Dorsolateral prefrontal cortex (tissue), 120 donors: ENCODE measurements at regions of chr5 and their contacts with region 1.

Region 1: DNA sequence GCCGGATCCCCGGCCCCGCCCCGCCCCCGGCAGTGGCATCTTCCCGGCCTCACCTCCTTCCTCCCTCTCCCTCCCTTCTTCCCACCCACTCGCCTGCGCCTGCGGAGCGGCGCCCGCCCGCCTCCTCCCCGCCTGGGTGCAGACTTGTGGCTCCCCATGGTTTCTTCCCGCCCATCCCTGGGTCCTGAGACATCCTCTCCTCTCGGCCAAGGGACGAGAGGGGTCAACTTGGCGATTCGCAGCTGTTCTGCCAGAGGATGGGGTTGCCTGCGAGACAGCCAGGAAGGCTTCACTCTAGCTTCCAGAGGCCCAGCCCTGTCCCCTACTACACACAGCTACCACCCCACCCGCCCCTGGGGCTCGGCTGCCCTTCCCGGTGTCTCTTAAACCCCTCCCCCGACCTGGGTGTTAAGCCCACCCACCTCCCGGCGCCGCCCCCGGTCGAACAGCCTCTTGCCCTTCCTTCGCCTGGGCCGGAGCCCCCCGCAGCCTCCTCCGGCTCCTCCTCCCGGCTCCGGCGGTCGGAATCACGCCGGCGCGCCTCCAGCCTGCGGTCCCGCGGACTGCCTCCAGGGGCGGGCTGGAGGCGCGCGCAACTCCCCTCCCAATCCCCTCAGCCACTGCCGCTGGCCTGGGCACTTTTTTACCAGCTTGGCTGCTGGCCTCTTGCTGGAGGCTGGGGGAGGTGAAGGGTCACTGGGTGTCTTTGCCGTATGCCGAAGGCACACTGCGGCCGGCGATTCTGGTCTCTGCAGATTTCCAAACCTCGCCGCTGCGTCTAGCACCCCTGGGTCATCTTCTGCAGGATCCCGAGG is 1.9 kb downstream of the JADE2 start:
- DNase-seq: peak; percentile 47 to 89 (median 74)
- H3K4me3 ChIP-seq: peak overlapping the region; percentile 67 to 98 (median 92)
- H3K27ac ChIP-seq: peak overlapping the region; percentile 94 to 100 (median 100)
- H3K27me3 ChIP-seq: no peaks in the 10 kb centered on the region
- CTCF ChIP-seq: peak in 55 of 56 donors; percentile 40 to 82 (median 66)

Region 2: DNA sequence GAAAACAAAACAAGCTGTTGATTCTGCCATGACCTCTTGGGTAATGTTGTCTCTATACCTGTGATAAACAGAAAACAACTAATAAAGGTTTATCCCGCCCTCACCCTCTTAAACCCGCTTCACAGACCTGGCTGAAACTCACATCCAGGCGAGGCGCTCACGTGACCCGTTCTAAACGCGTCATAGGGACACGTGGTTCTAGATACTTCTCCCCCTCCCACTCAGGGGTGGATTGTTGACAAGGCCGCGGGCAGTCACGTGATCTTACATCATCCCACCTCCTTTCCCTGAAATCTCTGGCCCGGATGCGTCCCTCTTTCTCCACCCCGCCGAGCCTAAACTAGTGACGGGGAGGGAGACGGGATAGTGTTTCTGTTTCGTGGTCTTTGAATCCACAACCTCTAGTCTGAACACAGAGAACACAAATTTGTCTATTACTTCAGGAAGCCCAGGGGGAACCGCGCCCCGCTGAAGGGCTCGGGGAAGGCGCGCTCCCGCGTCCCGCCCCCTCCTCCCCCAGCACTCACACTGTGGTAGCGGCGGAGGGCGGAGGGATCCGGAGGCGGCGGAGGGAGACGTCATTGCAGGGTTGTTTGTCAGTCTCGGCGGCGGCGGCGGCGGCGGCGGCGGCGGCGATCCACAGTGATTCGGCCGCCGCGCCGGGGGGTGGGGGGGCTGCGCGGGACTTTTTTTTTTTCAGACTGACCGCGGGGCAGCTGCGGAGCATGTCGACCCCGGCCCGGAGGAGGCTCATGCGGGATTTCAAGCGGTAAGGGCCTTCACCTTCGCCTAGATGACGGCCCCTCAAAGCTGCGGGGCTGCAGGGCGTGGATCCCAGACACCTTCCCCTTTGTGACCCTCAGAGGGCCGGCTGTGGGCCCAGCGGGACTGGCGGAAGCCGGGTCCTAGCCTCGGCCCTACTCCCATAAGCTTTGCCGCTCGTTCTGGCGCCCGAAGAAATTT is 156.2 kb before region 1 on chr5 and contains the start of gene UBE2B:
- intact Hi-C with region 1: loop called (anchors 1 kb)
- DNase-seq: peak; percentile 96 to 100 (median 99)
- H3K4me3 ChIP-seq: peak within 1 kb of the TSS; percentile 60 to 100 (median 98)
- H3K27ac ChIP-seq: peak within 1 kb of the TSS; percentile 82 to 100 (median 99)
- H3K27me3 ChIP-seq: no peaks in the 10 kb centered on the region
- CTCF ChIP-seq: peak in 14 of 56 donors; percentile 2 to 35 (median 19)
- total RNA-seq, gene UBE2B: 45.5 to 171 (median 102) TPM

Region 3: DNA sequence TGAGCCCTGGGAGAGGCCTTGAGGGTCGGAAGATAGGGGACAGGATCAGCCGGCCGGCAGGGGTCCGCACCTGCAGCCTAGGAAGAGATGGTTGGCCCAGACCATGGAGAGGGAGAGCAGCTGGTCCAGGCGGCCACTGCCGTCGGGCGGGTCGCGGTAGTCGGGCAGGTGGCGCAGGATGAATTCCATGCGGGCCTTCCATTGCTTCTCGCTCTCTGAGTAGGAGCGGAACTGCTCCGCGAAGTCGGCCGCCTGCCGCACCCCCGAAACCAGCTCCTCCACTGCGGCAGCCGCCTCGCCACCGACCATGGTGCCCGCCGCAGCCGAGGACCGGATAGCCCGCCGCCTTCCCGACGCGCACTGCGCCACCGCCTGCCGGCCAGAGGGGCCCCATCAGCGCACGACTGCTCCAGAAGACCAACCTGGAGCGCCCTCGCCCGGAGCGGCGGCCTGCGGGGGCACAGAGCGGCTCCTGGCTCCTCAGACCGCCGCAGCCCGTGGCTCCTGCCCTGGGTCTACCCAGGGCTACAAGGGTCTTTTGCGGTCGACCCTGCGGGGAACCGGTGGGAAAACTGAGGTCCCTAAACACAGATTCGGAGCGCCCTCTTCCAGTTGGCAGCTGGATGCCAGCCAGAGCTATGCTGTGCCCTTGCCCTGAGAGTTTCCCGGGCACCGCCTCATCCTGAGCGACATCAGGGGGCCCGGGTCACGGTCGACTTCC is 115.6 kb before region 1 on chr5 and contains the start of gene CDKN2AIPNL:
- intact Hi-C with region 1: loop called (anchors 1 to 2 kb)
- DNase-seq: peak; percentile 88 to 97 (median 92)
- H3K4me3 ChIP-seq: peak within 1 kb of the TSS; percentile 62 to 99 (median 89)
- H3K27ac ChIP-seq: peak within 1 kb of the TSS; percentile 4 to 95 (median 84)
- H3K27me3 ChIP-seq: no peaks in the 10 kb centered on the region
- CTCF ChIP-seq: peak; percentile 73 to 99 (median 94)
- total RNA-seq, gene CDKN2AIPNL: 16.6 to 49.6 (median 33.7) TPM

Region 4: GRCh38 chr5:134465816-134466240 is 61.5 kb before region 1 on chr5:
- intact Hi-C with region 1: loop called (anchors 1 kb)
- DNase-seq: peak; percentile 69 to 89 (median 76)
- H3K4me3 ChIP-seq: peak overlapping the region; percentile 36 to 79 (median 66)
- H3K27ac ChIP-seq: peak overlapping the region; percentile 76 to 99 (median 96)
- H3K27me3 ChIP-seq: no peaks in the 10 kb centered on the region
- CTCF ChIP-seq: peak in 3 of 56 donors; percentile 5 to 16 (median 12)

Region 5: GRCh38 chr5:134577796-134578363 is 50.5 kb after region 1 on chr5:
- intact Hi-C with region 1: loop called (anchors 2 to 5 kb)
- DNase-seq: peak in 9 of 10 donors; percentile 75 to 85 (median 80)
- H3K4me3 ChIP-seq: peak overlapping the region in 1 of 59 donors; percentile 7
- H3K27ac ChIP-seq: peak overlapping the region in 10 of 59 donors; percentile 0 to 65 (median 21)
- H3K27me3 ChIP-seq: no peaks in the 10 kb centered on the region
- CTCF ChIP-seq: peak; percentile 60 to 92 (median 83)

Region 6: GRCh38 chr5:134637161-134637582 is 109.8 kb after region 1 on chr5:
- intact Hi-C with region 1: loop called in 1 of 2 experiments (anchors 10 kb)
- DNase-seq: no peak
- H3K4me3 ChIP-seq: no peak overlapping the region
- H3K27ac ChIP-seq: no peak overlapping the region
- H3K27me3 ChIP-seq: no peaks in the 10 kb centered on the region
- CTCF ChIP-seq: no peak

Region 7: GRCh38 chr5:134845852-134846640 is 318.7 kb after region 1 on chr5 and contains the start of gene C5orf24:
- intact Hi-C with region 1: loop called in 1 of 2 experiments (anchors 10 kb)
- DNase-seq: peak; percentile 89 to 96 (median 94)
- H3K4me3 ChIP-seq: peak within 1 kb of the TSS; percentile 61 to 99 (median 92)
- H3K27ac ChIP-seq: peak within 1 kb of the TSS; percentile 74 to 98 (median 95)
- H3K27me3 ChIP-seq: no peaks in the 10 kb centered on the region
- CTCF ChIP-seq: peak in 38 of 56 donors; percentile 11 to 64 (median 33)
- total RNA-seq, gene C5orf24: 38.2 to 79.3 (median 56.7) TPM

Region 8: DNA sequence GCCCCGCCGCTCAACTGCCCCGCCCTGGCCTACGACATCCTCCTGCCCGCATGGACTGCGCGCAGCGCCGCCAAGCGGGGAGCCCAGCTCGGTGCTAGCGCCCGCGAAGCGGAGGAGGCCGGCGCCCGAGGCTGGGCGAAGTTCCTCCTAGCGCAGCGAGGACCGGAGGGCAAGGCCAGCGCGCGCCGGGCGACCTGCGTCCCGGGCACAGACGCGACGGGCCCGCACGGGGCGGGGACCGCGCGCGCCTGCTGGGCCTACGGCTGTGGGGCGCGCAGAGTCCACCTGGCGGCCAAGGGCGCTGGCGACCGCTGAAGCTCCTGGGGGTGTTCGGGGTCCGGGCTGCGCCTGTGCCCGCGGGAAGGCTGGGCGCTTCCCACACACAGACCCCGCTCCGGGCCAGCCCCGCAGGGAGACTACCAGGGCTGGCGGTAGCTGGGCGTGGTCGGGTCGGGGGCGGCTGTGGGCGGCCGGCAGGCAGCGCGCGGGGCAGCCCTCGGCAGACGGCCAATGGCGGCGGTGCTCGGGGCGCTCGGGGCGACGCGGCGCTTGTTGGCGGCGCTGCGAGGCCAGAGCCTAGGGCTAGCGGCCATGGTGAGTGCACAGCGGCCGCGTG is 377.4 kb after region 1 on chr5 and contains the start of gene PCBD2:
- intact Hi-C with region 1: no loop called
- DNase-seq: peak; percentile 76 to 92 (median 84)
- H3K4me3 ChIP-seq: peak within 1 kb of the TSS; percentile 44 to 94 (median 82)
- H3K27ac ChIP-seq: peak within 1 kb of the TSS; percentile 79 to 99 (median 96)
- H3K27me3 ChIP-seq: no peaks in the 10 kb centered on the region
- CTCF ChIP-seq: peak; percentile 43 to 94 (median 80)
- total RNA-seq, gene PCBD2: 5.3 to 19.3 (median 9.8) TPM